CD4-positive, alpha-beta memory T cell (primary cell): ENCODE measurements at regions of chr3 and their contacts with region 1.

Region 1: GRCh38 chr3:28286595-28286994 is 45.2 kb downstream of the CMC1 start:
- DNase-seq: peak in 4 of 5 donors; percentile 28 to 38 (median 31)
- H3K4me3 ChIP-seq: no peak overlapping the region
- H3K4me3 Mint-ChIP-seq: no peak overlapping the region
- H3K27ac ChIP-seq: no peak overlapping the region
- H3K27ac Mint-ChIP-seq: no peak overlapping the region
- H3K4me1 ChIP-seq: no peaks in the 10 kb centered on the region
- H3K4me1 Mint-ChIP-seq: peaks cover 9 to 24% (median 12%) of the 10 kb centered on the region in 4 donors
- H3K27me3 ChIP-seq: no peaks in the 10 kb centered on the region
- H3K27me3 Mint-ChIP-seq: no peaks in the 10 kb centered on the region

Region 2: GRCh38 chr3:27943106-27943505 is 343.5 kb before region 1 on chr3:
- CTCF ChIA-PET with region 1: no interaction called
- POLR2A ChIA-PET with region 1: no interaction called
- intact Hi-C with region 1: loop called (anchors 10 kb)
- DNase-seq: no peak
- H3K4me3 ChIP-seq: no peak overlapping the region
- H3K4me3 Mint-ChIP-seq: no peak overlapping the region
- H3K27ac ChIP-seq: no peak overlapping the region
- H3K27ac Mint-ChIP-seq: no peak overlapping the region
- H3K4me1 ChIP-seq: no peaks in the 10 kb centered on the region
- H3K4me1 Mint-ChIP-seq: no peaks in the 10 kb centered on the region
- H3K27me3 ChIP-seq: no peaks in the 10 kb centered on the region
- H3K27me3 Mint-ChIP-seq: no peaks in the 10 kb centered on the region

Region 3: GRCh38 chr3:28077572-28077971 is 209.0 kb before region 1 on chr3:
- CTCF ChIA-PET with region 1: no interaction called
- POLR2A ChIA-PET with region 1: no interaction called
- intact Hi-C with region 1: loop called (anchors 1 kb)
- DNase-seq: no peak
- H3K4me3 ChIP-seq: no peak overlapping the region
- H3K4me3 Mint-ChIP-seq: no peak overlapping the region
- H3K27ac ChIP-seq: no peak overlapping the region
- H3K27ac Mint-ChIP-seq: no peak overlapping the region
- H3K4me1 ChIP-seq: no peaks in the 10 kb centered on the region
- H3K4me1 Mint-ChIP-seq: peaks cover 0 to 3% (median under 1%) of the 10 kb centered on the region in 4 donors
- H3K27me3 ChIP-seq: no peaks in the 10 kb centered on the region
- H3K27me3 Mint-ChIP-seq: peaks cover 0 to 1% of the 10 kb centered on the region in 2 donors

Region 4: GRCh38 chr3:28343144-28343543 is 56.5 kb after region 1 on chr3:
- CTCF ChIA-PET with region 1: no interaction called
- POLR2A ChIA-PET with region 1: no interaction called
- intact Hi-C with region 1: no loop called
- DNase-seq: no peak
- H3K4me3 ChIP-seq: no peak overlapping the region
- H3K4me3 Mint-ChIP-seq: peak overlapping the region in 3 of 8 donors; percentile 2 to 36 (median 18)
- H3K27ac ChIP-seq: no peak overlapping the region
- H3K27ac Mint-ChIP-seq: peak overlapping the region in 5 of 7 donors; percentile 4 to 74 (median 31)
- H3K4me1 ChIP-seq: peaks cover 46% of the 10 kb centered on the region
- H3K4me1 Mint-ChIP-seq: peaks cover 40 to 64% (median 50%) of the 10 kb centered on the region in 4 donors
- H3K27me3 ChIP-seq: no peaks in the 10 kb centered on the region
- H3K27me3 Mint-ChIP-seq: no peaks in the 10 kb centered on the region